Transverse colon (tissue), 4 donors: ENCODE measurements at regions of chr7 and their contacts with region 1.

Region 1: GRCh38 chr7:87369216-87369615 is 23.8 kb downstream of the CROT start:
- DNase-seq: no peak
- H3K4me3 ChIP-seq: no peak overlapping the region
- H3K27ac ChIP-seq: no peak overlapping the region
- H3K4me1 ChIP-seq: no peaks in the 10 kb centered on the region
- H3K27me3 ChIP-seq: no peaks in the 10 kb centered on the region
- CTCF ChIP-seq: no peak
- EP300 ChIP-seq: no peak
- POLR2A ChIP-seq: no peak

Region 2: GRCh38 chr7:87310790-87311419 is 58.3 kb before region 1 on chr7:
- in situ Hi-C with region 1: no loop called
- intact Hi-C with region 1: no loop called
- DNase-seq: no peak
- H3K4me3 ChIP-seq: no peak overlapping the region
- H3K27ac ChIP-seq: no peak overlapping the region
- H3K4me1 ChIP-seq: no peaks in the 10 kb centered on the region
- H3K27me3 ChIP-seq: no peaks in the 10 kb centered on the region
- CTCF ChIP-seq: no peak
- EP300 ChIP-seq: no peak
- POLR2A ChIP-seq: no peak

Region 3: GRCh38 chr7:88219781-88220747 is 850.8 kb after region 1 on chr7 and contains the start of gene SRI:
- in situ Hi-C with region 1: no loop called
- intact Hi-C with region 1: loop called (anchors 10 kb)
- DNase-seq: peak; percentile 91
- H3K4me3 ChIP-seq: peak within 1 kb of the TSS; percentile 85 to 93 (median 90)
- H3K27ac ChIP-seq: peak within 1 kb of the TSS; percentile 92 to 96 (median 93)
- H3K4me1 ChIP-seq: peaks cover 3 to 45% (median 24%) of the 10 kb centered on the region in 4 donors
- H3K27me3 ChIP-seq: no peaks in the 10 kb centered on the region
- CTCF ChIP-seq: peak; percentile 60 to 98 (median 96)
- EP300 ChIP-seq: no peak
- POLR2A ChIP-seq: peak; percentile 69
- total RNA-seq, gene SRI: 163 to 672 (median 475) TPM